ENCODE measurements at regions of chr5 and their contacts with region 1.

Region 1: GRCh38 chr5:33153831-33154230 is 286.9 kb upstream of the TARS1 start:
- DNase-seq: no peak
- ATAC-seq: no peak
- H3K4me3 ChIP-seq: no peak overlapping the region
- H3K27ac ChIP-seq: no peak overlapping the region
- H3K4me1 ChIP-seq: no peaks in the 10 kb centered on the region
- H3K27me3 ChIP-seq: no peaks in the 10 kb centered on the region
- CTCF ChIP-seq: no peak

Region 2: GRCh38 chr5:33244441-33245150 is 90.8 kb after region 1 on chr5:
- CTCF ChIA-PET with region 1: no interaction called
- POLR2A ChIA-PET with region 1: interaction called, 32 read pairs
- in situ Hi-C with region 1: no loop called
- intact Hi-C with region 1: no loop called
- DNase-seq: no peak
- ATAC-seq: no peak
- H3K4me3 ChIP-seq: no peak overlapping the region
- H3K27ac ChIP-seq: no peak overlapping the region
- H3K4me1 ChIP-seq: no peaks in the 10 kb centered on the region
- H3K27me3 ChIP-seq: no peaks in the 10 kb centered on the region
- CTCF ChIP-seq: no peak